CD4-positive, alpha-beta memory T cell (primary cell): ENCODE measurements at regions of chr1 and their contacts with region 1.

Region 1: DNA sequence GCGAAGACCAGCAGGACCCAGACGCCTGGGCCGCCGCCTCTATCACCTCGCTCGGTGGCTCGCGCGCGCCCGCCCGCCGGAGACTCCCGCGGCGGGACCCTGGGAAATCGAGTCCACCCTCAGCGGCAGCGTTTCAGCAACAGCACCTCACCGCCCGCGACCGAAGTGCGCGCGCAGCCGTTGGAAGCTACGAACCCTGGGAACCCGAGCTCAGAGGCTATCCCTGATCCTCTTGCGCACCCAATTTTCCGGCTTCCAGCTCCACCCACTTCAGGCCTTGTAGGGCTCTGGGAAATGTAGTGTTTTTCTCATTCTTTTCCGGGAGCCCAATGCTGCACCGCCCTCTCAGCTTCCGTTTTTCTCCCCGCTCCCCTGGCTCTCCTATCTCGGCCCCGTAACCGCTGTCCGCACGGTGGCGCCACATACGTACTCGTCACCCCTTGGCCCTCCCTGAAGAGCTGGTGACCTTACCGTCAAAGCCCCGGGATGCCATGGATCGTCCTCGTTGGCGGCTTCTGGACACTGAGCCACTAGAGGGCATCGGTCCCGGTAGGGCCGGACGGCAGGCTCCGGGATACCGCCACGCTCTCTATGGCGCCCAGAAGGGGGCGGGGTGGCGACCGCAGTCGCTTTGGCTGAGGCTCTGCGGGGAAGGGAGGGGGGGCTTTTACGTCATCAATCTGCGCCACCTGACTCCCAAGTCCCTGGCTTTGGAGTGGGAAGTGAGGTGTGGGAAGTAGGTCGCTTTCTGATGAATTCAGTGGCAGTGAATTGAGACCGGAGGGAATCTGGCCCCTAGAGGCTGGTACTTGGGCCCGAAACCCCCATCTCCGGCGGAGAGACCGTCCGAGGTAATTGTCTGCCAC is at the starts of genes ODR4 and TPR:
- DNase-seq: peak; percentile 97 to 99 (median 98)
- H3K4me3 ChIP-seq: peak within 1 kb of the TSS; percentile 87 to 96
- H3K4me3 Mint-ChIP-seq: peak within 1 kb of the TSS; percentile 91 to 99 (median 98)
- H3K27ac ChIP-seq: peak within 1 kb of the TSS; percentile 83
- H3K27ac Mint-ChIP-seq: peak within 1 kb of the TSS; percentile 93 to 99 (median 98)
- H3K4me1 ChIP-seq: peaks cover 44% of the 10 kb centered on the region
- H3K4me1 Mint-ChIP-seq: peaks cover 19 to 61% (median 39%) of the 10 kb centered on the region in 4 donors
- H3K27me3 ChIP-seq: no peaks in the 10 kb centered on the region
- H3K27me3 Mint-ChIP-seq: no peaks in the 10 kb centered on the region
- total RNA-seq, gene ODR4: 15.9 to 17.3 TPM
- total RNA-seq, gene TPR: 159 to 167 TPM

Region 2: GRCh38 chr1:184973272-184974055 is 1401.9 kb before region 1 on chr1:
- CTCF ChIA-PET with region 1: no interaction called
- POLR2A ChIA-PET with region 1: interaction called, 3 read pairs
- intact Hi-C with region 1: loop called (anchors 5 kb)
- DNase-seq: peak in 3 of 5 donors; percentile 55 to 86 (median 71)
- H3K4me3 ChIP-seq: peak overlapping the region; percentile 70 to 85
- H3K4me3 Mint-ChIP-seq: peak overlapping the region; percentile 93 to 100 (median 98)
- H3K27ac ChIP-seq: peak overlapping the region; percentile 91
- H3K27ac Mint-ChIP-seq: peak overlapping the region; percentile 96 to 100 (median 97)
- H3K4me1 ChIP-seq: peaks cover 66% of the 10 kb centered on the region
- H3K4me1 Mint-ChIP-seq: peaks cover 37 to 74% (median 55%) of the 10 kb centered on the region in 4 donors
- H3K27me3 ChIP-seq: no peaks in the 10 kb centered on the region
- H3K27me3 Mint-ChIP-seq: no peaks in the 10 kb centered on the region

Region 3: DNA sequence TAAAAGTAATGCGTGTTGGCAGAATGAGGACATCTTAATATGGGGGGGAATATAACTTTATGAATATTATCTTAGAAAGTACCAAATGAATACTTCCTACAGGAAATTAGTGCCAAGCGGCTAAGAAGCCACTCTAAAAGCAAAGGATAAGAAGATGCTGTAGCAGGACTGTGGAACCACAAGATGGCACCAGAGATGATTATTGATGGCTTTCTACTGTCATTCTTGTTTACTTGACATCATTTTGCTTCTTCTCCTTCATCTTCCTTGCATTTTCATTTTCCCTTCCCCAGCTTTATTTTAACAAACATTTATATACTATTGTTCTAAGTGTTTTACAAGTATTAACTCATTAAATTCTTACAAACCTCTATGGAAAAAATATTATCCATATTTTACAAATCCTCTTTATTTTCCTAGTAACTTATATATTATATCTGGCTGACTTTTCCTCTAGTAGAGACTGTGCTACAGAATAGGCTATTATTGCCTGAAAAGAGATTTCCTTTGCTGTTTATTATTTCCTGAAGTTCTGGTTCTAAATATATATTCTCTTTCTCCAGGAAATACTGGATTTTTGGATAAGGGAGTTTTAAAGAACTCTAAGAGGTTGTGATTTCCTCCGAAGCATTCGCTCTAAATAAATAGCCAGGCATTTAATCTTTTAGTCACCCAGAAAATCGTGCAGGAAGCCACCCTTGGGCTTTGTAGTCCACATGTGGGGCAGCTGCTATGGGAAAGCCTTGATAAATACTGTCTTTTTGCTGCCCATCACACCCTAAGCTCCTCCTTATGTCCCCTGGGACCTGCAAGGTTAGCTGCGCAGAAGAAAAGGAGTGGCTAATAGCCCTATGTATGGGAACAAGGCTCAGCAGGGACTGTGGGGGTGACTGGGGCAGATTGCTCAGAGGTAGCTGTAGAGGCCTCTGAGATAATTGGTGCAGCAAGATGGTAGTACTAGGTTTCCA is 70.1 kb before region 1 on chr1:
- CTCF ChIA-PET with region 1: interaction called, 11 read pairs
- POLR2A ChIA-PET with region 1: interaction called, 6 read pairs
- intact Hi-C with region 1: no loop called
- DNase-seq: peak in 3 of 5 donors; percentile 25 to 42 (median 34)
- H3K4me3 ChIP-seq: no peak overlapping the region
- H3K4me3 Mint-ChIP-seq: peak overlapping the region in 3 of 8 donors; percentile 3 to 54 (median 37)
- H3K27ac ChIP-seq: no peak overlapping the region
- H3K27ac Mint-ChIP-seq: peak overlapping the region; percentile 53 to 91 (median 79)
- H3K4me1 ChIP-seq: peaks cover 79% of the 10 kb centered on the region
- H3K4me1 Mint-ChIP-seq: peaks cover 31 to 45% (median 39%) of the 10 kb centered on the region in 4 donors
- H3K27me3 ChIP-seq: no peaks in the 10 kb centered on the region
- H3K27me3 Mint-ChIP-seq: peaks cover 0 to 1% of the 10 kb centered on the region in 2 donors

Region 4: GRCh38 chr1:186330758-186331157 is 44.6 kb before region 1 on chr1:
- CTCF ChIA-PET with region 1: interaction called, 10 read pairs
- POLR2A ChIA-PET with region 1: interaction called, 6 read pairs
- intact Hi-C with region 1: no loop called
- DNase-seq: no peak
- H3K4me3 ChIP-seq: no peak overlapping the region
- H3K4me3 Mint-ChIP-seq: no peak overlapping the region
- H3K27ac ChIP-seq: no peak overlapping the region
- H3K27ac Mint-ChIP-seq: peak overlapping the region in 1 of 7 donors; percentile 15
- H3K4me1 ChIP-seq: no peaks in the 10 kb centered on the region
- H3K4me1 Mint-ChIP-seq: peaks cover 0 to 9% (median 5%) of the 10 kb centered on the region in 4 donors
- H3K27me3 ChIP-seq: no peaks in the 10 kb centered on the region
- H3K27me3 Mint-ChIP-seq: no peaks in the 10 kb centered on the region

Region 5: GRCh38 chr1:186363891-186364290 is 11.4 kb before region 1 on chr1:
- CTCF ChIA-PET with region 1: interaction called, 16 read pairs
- POLR2A ChIA-PET with region 1: interaction called, 5 read pairs
- intact Hi-C with region 1: no loop called
- DNase-seq: no peak
- H3K4me3 ChIP-seq: no peak overlapping the region
- H3K4me3 Mint-ChIP-seq: no peak overlapping the region
- H3K27ac ChIP-seq: no peak overlapping the region
- H3K27ac Mint-ChIP-seq: no peak overlapping the region
- H3K4me1 ChIP-seq: no peaks in the 10 kb centered on the region
- H3K4me1 Mint-ChIP-seq: peaks cover 8 to 17% (median 13%) of the 10 kb centered on the region in 4 donors
- H3K27me3 ChIP-seq: no peaks in the 10 kb centered on the region
- H3K27me3 Mint-ChIP-seq: no peaks in the 10 kb centered on the region

Region 6: GRCh38 chr1:186386725-186387383 is 11.5 kb after region 1 on chr1:
- CTCF ChIA-PET with region 1: interaction called, 14 read pairs
- POLR2A ChIA-PET with region 1: interaction called, 4 read pairs
- intact Hi-C with region 1: no loop called
- DNase-seq: no peak
- H3K4me3 ChIP-seq: no peak overlapping the region
- H3K4me3 Mint-ChIP-seq: no peak overlapping the region
- H3K27ac ChIP-seq: no peak overlapping the region
- H3K27ac Mint-ChIP-seq: no peak overlapping the region
- H3K4me1 ChIP-seq: no peaks in the 10 kb centered on the region
- H3K4me1 Mint-ChIP-seq: peaks cover 0 to 2% (median 2%) of the 10 kb centered on the region in 4 donors
- H3K27me3 ChIP-seq: no peaks in the 10 kb centered on the region
- H3K27me3 Mint-ChIP-seq: no peaks in the 10 kb centered on the region

Region 7: DNA sequence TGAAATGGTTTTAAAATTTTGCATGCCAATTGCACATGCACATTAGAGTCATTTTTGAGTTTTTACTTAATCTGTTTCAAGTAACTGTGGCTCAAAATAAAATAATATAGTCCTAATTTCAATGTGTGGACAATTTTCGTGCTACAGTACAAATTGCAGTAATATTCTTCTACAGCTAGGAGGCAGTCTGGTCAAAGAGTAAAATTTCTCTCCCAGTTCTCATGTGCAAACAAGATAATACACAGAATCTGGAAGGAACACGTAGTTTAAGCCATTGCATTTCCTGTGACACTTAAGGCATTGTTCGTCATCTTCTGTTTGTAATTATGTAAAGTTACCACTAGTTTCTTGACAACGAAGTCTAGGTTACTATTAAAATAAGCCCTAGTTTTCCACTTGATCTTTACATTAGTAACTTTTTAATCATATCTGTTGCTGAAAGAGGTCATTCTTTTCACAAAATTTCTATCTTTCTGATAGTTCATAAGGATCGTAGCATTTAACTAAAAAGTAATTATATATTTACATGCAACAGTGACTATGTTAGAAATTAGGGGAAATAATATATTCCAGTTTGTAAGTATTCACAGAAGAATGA is 29.2 kb after region 1 on chr1:
- CTCF ChIA-PET with region 1: interaction called, 14 read pairs
- POLR2A ChIA-PET with region 1: interaction called, 3 read pairs
- intact Hi-C with region 1: no loop called
- DNase-seq: peak in 4 of 5 donors; percentile 39 to 61 (median 48)
- H3K4me3 ChIP-seq: no peak overlapping the region
- H3K4me3 Mint-ChIP-seq: no peak overlapping the region
- H3K27ac ChIP-seq: no peak overlapping the region
- H3K27ac Mint-ChIP-seq: peak overlapping the region in 3 of 7 donors; percentile 39 to 68 (median 49)
- H3K4me1 ChIP-seq: no peaks in the 10 kb centered on the region
- H3K4me1 Mint-ChIP-seq: peaks cover 0 to 3% (median 1%) of the 10 kb centered on the region in 4 donors
- H3K27me3 ChIP-seq: no peaks in the 10 kb centered on the region
- H3K27me3 Mint-ChIP-seq: no peaks in the 10 kb centered on the region